Activated CD4-positive, alpha-beta memory T cell treated with anti-CD3 and anti-CD28 coated beads, Interleukin-2, amount 10 ng/mL, durations not matched to agents 7 days and 5 days (primary cell): ENCODE measurements at regions of chr11 and their contacts with region 1.

Region 1: DNA sequence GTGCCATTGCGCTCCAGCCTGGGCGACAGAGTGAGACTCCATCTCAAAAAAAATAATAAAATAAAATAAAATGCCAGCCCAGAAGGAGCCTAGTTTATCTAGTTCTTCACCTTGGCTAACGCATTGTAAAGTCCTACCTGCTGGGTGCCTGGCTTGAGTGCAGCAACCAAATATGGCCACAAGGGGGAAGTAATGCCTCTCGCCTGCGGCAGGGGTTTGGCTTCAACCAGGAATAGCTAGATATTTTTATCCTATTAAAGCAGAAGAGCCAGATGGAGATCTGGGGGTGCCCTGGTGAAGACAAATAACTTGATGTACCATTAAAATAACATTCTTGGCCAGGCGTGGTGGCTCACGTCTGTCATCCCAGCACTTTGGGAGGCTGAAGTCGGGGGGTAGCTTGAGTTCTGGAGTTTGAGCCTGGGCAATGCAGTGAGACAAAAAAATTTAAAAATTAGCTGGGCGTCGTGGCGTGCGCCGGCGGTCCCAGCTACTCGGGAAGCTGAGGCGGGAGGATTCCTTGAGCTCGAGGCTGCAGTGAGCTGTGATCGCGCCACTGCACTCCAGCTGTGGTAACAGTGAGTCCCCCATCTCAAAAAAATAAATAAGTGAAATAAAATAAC is 20.6 kb upstream of the PLEKHB1 start:
- DNase-seq: peak; percentile 67
- H3K4me3 Mint-ChIP-seq: no peak overlapping the region
- H3K27ac Mint-ChIP-seq: no peak overlapping the region
- H3K4me1 Mint-ChIP-seq: peaks cover 2% of the 10 kb centered on the region
- H3K27me3 Mint-ChIP-seq: peaks cover 22% of the 10 kb centered on the region

Region 2: GRCh38 chr11:73325036-73325981 is 300.5 kb before region 1 on chr11:
- CTCF ChIA-PET with region 1: no interaction called
- POLR2A ChIA-PET with region 1: no interaction called
- DNase-seq: no peak
- H3K4me3 Mint-ChIP-seq: no peak overlapping the region
- H3K27ac Mint-ChIP-seq: no peak overlapping the region
- H3K4me1 Mint-ChIP-seq: no peaks in the 10 kb centered on the region
- H3K27me3 Mint-ChIP-seq: no peaks in the 10 kb centered on the region

Region 3: DNA sequence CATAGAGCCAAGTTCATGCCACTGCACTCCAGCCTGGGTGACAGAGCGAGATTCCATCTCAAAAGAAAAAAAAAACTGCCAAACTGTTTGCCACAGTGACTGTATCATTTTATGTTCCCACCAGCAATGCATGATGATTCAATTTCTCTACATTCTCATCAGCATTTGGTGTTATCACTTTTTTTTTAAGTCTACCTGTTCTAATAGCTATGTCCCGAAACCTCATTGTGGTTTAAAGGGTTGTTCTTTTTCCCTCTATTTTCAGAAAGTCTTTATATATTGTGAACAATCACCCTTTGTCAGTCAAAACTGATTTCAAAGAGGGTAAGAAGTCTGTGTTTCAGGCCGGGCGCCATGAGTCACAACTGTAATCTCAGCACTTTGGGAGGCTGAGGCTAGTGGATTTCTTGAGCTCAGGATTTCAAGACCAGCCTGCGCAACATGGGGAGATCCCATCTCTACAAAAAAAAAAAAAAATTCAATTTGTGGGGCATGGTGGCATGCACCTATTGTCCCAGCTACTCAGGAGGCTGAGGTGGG is 13.1 kb before region 1 on chr11:
- CTCF ChIA-PET with region 1: interaction called, 10 read pairs
- POLR2A ChIA-PET with region 1: no interaction called
- DNase-seq: no peak
- H3K4me3 Mint-ChIP-seq: no peak overlapping the region
- H3K27ac Mint-ChIP-seq: no peak overlapping the region
- H3K4me1 Mint-ChIP-seq: no peaks in the 10 kb centered on the region
- H3K27me3 Mint-ChIP-seq: peaks cover 9% of the 10 kb centered on the region

Region 4: DNA sequence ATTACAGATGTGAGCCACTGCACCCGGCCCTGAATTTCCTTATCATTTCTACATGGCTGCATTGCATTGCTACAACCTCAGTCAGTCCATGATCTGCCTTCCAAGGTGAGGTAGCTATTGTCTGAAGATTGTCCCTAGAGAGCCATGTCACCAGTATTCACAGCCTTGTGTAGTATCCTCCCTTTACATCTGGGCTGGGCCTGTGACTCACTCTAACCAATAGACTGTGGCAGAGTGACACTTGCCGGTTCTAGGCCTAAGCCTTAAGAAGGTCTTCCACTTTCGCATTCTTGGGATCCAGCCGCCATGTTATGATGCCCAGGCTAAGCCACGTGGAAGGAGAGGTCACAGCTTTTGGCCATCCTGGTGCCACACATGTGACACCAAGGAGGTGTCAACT is 10.4 kb after region 1 on chr11:
- CTCF ChIA-PET with region 1: interaction called, 22 read pairs
- POLR2A ChIA-PET with region 1: no interaction called
- DNase-seq: no peak
- H3K4me3 Mint-ChIP-seq: no peak overlapping the region
- H3K27ac Mint-ChIP-seq: no peak overlapping the region
- H3K4me1 Mint-ChIP-seq: peaks cover 10% of the 10 kb centered on the region
- H3K27me3 Mint-ChIP-seq: peaks cover 5% of the 10 kb centered on the region

Region 5: DNA sequence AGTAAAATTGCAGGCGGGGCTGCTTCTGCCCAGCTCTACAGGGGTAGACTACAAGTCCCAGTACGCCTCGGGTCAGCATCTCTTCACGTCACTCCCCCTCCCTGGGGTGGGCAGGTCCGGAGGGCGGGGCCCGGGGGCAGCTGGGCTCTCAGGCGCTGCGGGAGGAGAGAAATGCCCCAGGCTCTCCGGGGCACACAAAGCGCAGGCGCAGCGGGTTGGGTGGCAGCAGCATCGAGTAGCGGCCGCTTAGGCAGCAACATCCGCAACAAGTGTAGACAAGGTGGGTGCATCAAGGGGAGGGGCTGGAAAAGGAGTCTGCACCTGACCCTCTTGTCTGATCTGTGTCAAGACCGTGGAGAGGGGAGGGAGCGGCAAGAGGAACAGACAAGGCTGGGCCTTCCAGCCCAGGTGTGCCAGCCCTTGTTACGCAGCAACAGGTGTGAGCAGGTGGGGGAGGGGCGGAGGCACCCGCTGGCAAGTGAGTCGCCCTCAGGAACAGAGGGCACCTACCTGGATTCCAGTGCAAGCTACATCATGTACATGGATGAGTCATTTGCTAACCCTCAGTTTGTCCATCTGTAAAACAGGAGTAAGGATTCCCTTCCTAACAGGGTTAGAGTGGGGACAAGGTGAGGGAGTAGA is 21.8 kb after region 1 on chr11:
- CTCF ChIA-PET with region 1: interaction called, 26 read pairs
- POLR2A ChIA-PET with region 1: no interaction called
- DNase-seq: peak; percentile 90
- H3K4me3 Mint-ChIP-seq: peak overlapping the region; percentile 64
- H3K27ac Mint-ChIP-seq: no peak overlapping the region
- H3K4me1 Mint-ChIP-seq: peaks cover 14% of the 10 kb centered on the region
- H3K27me3 Mint-ChIP-seq: no peaks in the 10 kb centered on the region

Region 6: DNA sequence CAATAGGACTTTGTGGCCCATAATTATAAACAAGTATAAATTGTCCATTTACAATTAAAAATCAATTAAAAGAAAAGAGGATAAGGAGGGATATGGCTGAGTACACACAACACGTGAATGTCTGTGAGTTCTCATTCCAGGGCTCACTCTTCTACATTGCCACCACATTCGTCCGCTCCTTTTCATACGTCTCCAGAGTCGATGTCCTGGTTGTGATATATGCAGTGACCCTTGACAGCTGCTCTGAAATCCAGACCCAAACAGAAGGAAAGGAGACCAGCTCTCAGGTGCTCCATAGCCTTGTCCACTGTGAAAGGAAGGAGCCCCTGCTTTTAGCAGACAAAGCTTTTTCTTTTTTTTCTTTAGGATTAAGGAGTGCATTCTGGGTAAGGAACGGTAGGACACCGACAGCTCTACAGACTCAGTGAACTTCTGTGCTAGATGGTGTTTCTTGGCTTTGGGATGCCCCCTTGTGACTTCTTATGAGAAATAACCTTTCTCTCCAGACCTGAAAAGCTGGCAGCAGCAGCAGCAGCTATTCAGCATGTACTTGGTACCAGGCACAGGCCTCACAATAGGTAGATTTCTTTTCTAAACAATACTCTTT is 305.3 kb after region 1 on chr11:
- CTCF ChIA-PET with region 1: interaction called, 26 read pairs
- POLR2A ChIA-PET with region 1: no interaction called
- DNase-seq: peak; percentile 22
- H3K4me3 Mint-ChIP-seq: no peak overlapping the region
- H3K27ac Mint-ChIP-seq: no peak overlapping the region
- H3K4me1 Mint-ChIP-seq: peaks cover 6% of the 10 kb centered on the region
- H3K27me3 Mint-ChIP-seq: no peaks in the 10 kb centered on the region